ENCODE measurements at regions of chr10 and their contacts with region 1.

Region 1: DNA sequence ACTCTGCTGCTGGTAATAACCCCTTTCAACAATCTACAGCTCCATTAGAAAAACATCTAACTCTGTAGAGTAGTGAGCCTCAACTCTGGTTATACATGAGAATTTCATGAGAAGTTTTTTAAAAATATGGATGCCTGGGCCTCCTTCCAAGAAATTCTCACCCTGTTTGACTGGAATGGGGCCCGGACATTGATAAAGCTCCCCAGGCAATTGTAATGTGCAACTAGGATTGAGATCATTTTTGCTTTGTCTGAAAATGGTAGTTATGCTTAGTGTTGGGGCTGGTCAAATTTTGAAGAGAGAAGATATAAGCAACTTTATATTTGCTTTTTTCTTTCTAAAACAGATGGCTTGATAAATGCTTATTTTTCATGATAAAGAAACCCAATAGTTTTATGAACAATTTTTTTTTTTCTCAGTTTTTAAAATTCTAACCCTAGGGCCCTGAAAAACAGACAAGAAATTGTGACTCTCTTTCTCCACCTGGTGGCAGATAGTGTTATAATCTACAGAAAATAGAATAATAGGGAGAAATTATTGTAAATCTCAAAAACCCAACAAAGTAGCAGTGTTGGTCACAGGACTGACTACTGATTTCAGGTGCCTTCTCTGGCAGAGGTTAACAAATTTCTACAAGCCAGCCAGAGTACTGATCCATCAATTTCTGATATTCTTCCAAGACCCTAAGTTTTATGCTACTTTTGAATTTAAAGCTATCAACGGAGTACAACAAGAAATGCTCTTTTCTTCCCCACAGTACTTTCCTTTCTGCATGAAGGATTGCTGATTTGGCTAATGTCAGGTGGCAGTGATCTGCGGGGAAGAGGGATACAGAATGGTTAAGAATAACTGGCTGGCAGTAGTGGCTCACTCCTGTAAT is 174.8 kb downstream of the DKK1 start:
- DNase-seq: peak; percentile 10
- H3K4me3 ChIP-seq: no peak overlapping the region
- H3K27ac ChIP-seq: no peak overlapping the region
- H3K4me1 ChIP-seq: no peaks in the 10 kb centered on the region
- H3K27me3 ChIP-seq: no peaks in the 10 kb centered on the region
- CTCF ChIP-seq: peak; percentile 18 to 72 (median 68)
- POLR2A ChIP-seq: no peak

Region 2: DNA sequence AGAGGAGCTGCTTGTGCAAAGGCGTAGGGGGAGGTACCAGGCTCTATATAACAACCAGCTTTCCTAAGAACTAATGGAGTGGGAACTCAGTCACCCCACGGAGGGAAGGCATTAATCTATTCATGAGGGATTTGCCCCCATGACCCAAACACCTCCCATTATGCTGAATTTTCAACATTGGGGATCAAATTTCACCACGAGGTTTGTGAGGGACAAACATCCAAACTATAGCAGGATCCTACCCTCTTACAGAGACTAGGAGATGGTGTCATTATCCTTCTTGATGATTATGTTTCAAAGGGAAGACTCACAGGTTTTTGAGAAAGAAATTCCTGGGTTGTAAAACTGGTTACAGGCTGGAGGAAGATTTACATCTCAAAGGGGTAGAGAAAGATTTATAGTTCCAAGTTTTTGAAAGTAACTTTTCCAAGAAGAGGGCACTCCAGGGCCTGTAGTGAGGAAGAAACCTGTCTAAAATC is 469.7 kb before region 1 on chr10:
- intact Hi-C with region 1: no loop called
- DNase-seq: no peak
- H3K4me3 ChIP-seq: no peak overlapping the region
- H3K27ac ChIP-seq: no peak overlapping the region
- H3K4me1 ChIP-seq: no peaks in the 10 kb centered on the region
- H3K27me3 ChIP-seq: no peaks in the 10 kb centered on the region
- CTCF ChIP-seq: no peak
- POLR2A ChIP-seq: no peak

Region 3: DNA sequence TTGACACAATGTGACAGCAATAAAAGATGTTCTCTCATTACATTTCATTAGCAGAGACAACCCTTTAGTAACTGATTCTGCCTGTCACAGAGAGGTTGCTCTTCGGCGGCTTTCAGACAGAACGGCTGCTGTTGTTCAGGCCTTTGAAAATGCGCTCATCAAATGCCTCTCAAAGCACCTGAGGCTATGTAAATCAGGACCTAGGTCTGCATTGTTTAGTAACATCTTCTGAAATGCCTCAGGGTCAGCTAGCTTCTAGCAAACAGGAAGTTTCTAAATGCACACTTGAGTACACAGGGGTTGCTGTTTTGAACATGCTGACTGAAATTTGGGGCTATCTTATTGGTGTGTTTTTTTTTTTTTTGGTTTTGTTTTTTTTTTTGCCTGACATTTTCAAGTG is 318.1 kb before region 1 on chr10:
- intact Hi-C with region 1: no loop called
- DNase-seq: no peak
- H3K4me3 ChIP-seq: no peak overlapping the region
- H3K27ac ChIP-seq: no peak overlapping the region
- H3K4me1 ChIP-seq: no peaks in the 10 kb centered on the region
- H3K27me3 ChIP-seq: no peaks in the 10 kb centered on the region
- CTCF ChIP-seq: no peak
- POLR2A ChIP-seq: no peak

Region 4: GRCh38 chr10:52313933-52314816 is 174.7 kb before region 1 on chr10 and contains the start of gene DKK1:
- intact Hi-C with region 1: loop called (anchors 5 kb)
- DNase-seq: peak; percentile 51
- H3K4me3 ChIP-seq: peak within 1 kb of the TSS; percentile 30 to 38
- H3K27ac ChIP-seq: no peak within 1 kb of the TSS
- H3K4me1 ChIP-seq: no peaks in the 10 kb centered on the region
- H3K27me3 ChIP-seq: no peaks in the 10 kb centered on the region
- CTCF ChIP-seq: peak in 3 of 4 experiments; percentile 46 to 87 (median 48)
- POLR2A ChIP-seq: peak; percentile 28
- total RNA-seq, gene DKK1: 6.5 to 10.2 TPM